BJ (cell line): ENCODE measurements at regions of chr6 and their contacts with region 1.

Region 1: GRCh38 chr6:132279592-132280139 is 121.6 kb downstream of the MOXD1 start:
- DNase-seq: peak; percentile 34
- H3K4me3 ChIP-seq: peak overlapping the region; percentile 49
- H3K27me3 ChIP-seq: no peaks in the 10 kb centered on the region
- CTCF ChIP-seq: peak; percentile 74

Region 2: DNA sequence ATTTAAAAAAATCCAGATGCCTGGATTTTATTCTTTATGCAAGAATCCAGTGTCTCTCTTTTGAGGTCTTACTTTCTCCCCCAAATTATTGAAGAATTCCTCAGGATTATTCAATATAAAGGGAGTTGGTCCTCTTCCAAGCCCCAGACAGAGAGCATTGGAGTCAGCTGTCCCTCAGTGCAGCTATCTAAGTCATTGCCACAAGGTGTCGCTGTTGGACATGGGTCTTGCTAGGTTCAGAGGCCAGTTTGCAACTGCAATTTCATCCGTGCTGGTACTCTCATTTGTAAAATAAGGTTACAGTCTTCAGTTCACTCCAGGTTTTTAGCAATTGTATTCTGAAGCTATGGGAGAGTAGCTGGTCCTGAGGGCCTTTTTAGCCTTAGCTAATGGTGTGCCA is 356.3 kb before region 1 on chr6:
- CTCF ChIA-PET with region 1: interaction called, 52 read pairs
- POLR2A ChIA-PET with region 1: no interaction called
- DNase-seq: no peak
- H3K4me3 ChIP-seq: no peak overlapping the region
- H3K27me3 ChIP-seq: no peaks in the 10 kb centered on the region
- CTCF ChIP-seq: peak; percentile 61

Region 3: GRCh38 chr6:132202574-132202973 is 77.1 kb before region 1 on chr6:
- CTCF ChIA-PET with region 1: no interaction called
- POLR2A ChIA-PET with region 1: no interaction called
- DNase-seq: peak; percentile 88
- H3K4me3 ChIP-seq: no peak overlapping the region
- H3K27me3 ChIP-seq: no peaks in the 10 kb centered on the region
- CTCF ChIP-seq: no peak

Region 4: GRCh38 chr6:132259070-132259469 is 20.6 kb before region 1 on chr6:
- CTCF ChIA-PET with region 1: interaction called, 42 read pairs
- POLR2A ChIA-PET with region 1: no interaction called
- DNase-seq: no peak
- H3K4me3 ChIP-seq: no peak overlapping the region
- H3K27me3 ChIP-seq: no peaks in the 10 kb centered on the region
- CTCF ChIP-seq: peak; percentile 49

Region 5: GRCh38 chr6:132445201-132445951 is 165.7 kb after region 1 on chr6:
- CTCF ChIA-PET with region 1: interaction called, 13 read pairs
- POLR2A ChIA-PET with region 1: no interaction called
- DNase-seq: peak; percentile 80
- H3K4me3 ChIP-seq: no peak overlapping the region
- H3K27me3 ChIP-seq: no peaks in the 10 kb centered on the region
- CTCF ChIP-seq: no peak

Region 6: GRCh38 chr6:132465530-132466485 is 186.1 kb after region 1 on chr6:
- CTCF ChIA-PET with region 1: interaction called, 19 read pairs
- POLR2A ChIA-PET with region 1: no interaction called
- DNase-seq: no peak
- H3K4me3 ChIP-seq: no peak overlapping the region
- H3K27me3 ChIP-seq: no peaks in the 10 kb centered on the region
- CTCF ChIP-seq: no peak

Region 7: DNA sequence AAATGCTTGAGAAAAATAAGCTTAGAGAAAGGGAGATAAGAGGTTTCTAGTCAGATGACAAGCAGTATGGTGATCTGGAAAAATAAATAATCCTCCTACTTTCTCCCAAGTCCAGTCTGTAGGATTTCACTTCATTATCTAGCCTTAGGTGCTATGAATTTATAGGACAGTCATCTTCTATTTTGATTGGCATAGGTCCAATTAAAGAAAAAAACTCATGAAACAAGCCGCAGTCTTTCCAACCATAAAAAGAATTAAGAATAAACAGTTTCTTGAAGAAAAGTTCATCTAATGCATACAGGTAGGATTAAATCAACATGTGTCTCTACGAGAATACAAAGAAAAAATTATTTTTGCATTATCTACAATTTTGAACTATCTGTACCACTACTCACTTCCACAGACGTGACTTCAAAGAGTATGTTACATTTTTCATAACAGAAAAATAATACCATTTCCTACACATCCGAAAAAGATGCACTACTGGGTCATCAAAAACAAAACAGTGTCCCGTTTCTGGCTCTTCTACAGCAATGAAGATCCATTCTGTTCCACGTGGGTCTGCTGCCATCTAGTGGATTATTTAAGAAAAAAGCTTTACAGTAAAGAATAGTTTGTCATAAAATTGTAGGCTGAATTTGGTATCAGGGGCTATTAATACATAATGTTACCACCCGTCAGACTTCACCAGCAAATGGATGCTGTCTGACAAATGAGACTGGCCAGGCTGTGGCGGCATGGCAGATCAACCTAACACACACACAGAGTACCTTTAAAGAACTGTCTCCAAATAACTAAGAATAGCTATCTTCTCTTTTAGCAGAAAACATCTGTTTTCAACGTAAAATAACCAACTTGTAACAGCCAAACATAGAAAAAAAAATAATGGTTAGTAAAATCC is 204.4 kb after region 1 on chr6:
- CTCF ChIA-PET with region 1: interaction called, 159 read pairs
- POLR2A ChIA-PET with region 1: no interaction called
- DNase-seq: no peak
- H3K4me3 ChIP-seq: no peak overlapping the region
- H3K27me3 ChIP-seq: no peaks in the 10 kb centered on the region
- CTCF ChIP-seq: peak; percentile 57

Region 8: GRCh38 chr6:132495604-132496079 is 216.0 kb after region 1 on chr6:
- CTCF ChIA-PET with region 1: interaction called, 14 read pairs
- POLR2A ChIA-PET with region 1: no interaction called
- DNase-seq: no peak
- H3K4me3 ChIP-seq: no peak overlapping the region
- H3K27me3 ChIP-seq: no peaks in the 10 kb centered on the region
- CTCF ChIP-seq: no peak